ENCODE measurements at regions of chr6 and their contacts with region 1.

Region 1: GRCh38 chr6:136582711-136583471 is 32.7 kb upstream of the MAP7 start:
- DNase-seq: peak; percentile 81
- ATAC-seq: peak; percentile 48
- H3K4me3 ChIP-seq: no peak overlapping the region
- H3K27ac ChIP-seq: peak overlapping the region; percentile 80
- H3K4me1 ChIP-seq: peaks cover 6% of the 10 kb centered on the region
- H3K27me3 ChIP-seq: no peaks in the 10 kb centered on the region
- CTCF ChIP-seq: peak; percentile 70

Region 2: DNA sequence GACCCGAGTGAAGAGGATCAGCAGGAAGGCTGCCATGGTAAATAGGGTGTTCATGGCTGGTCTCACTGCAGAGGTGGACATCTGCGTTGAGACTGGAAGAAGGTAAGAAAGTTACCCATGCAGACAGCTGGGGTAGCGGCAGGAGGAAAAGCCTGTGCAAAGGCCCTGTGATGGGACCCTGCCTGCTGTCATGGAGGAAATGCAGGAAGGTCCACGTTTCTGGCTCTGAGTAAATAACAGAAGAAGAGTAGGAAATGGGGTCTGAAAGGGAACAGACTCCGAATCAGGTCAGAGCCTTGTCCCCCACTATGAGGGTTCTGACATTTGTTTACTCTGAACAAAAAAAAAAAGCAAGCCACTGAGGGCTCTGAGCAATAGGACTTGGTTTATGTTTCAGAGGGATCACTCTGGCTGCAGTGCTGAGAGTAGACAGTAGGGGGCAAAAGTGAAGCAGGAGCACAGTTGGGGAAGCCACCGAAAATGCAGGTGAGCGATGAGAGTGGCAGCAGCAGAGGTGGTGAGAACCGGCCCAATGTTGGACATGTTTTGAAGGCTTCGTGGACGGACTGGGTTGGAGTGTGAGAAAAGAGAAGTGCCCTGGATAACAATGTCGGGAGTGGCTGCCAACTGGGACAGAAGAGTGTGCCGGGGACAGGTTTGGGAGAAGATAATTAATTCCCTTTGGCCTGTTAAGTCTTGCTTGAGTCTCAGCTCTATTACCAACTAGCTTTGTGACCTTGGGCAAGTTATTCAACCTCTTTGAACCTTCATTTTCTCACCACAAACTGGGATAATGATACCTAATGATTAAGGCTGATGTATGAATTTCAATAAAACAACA is 25.3 kb after region 1 on chr6:
- CTCF ChIA-PET with region 1: no interaction called
- POLR2A ChIA-PET with region 1: no interaction called
- intact Hi-C with region 1: loop called (anchors 1 kb)
- DNase-seq: peak; percentile 76
- ATAC-seq: no peak
- H3K4me3 ChIP-seq: no peak overlapping the region
- H3K27ac ChIP-seq: peak overlapping the region; percentile 97
- H3K4me1 ChIP-seq: peaks cover 43% of the 10 kb centered on the region
- H3K27me3 ChIP-seq: no peaks in the 10 kb centered on the region
- CTCF ChIP-seq: peak; percentile 73

Region 3: DNA sequence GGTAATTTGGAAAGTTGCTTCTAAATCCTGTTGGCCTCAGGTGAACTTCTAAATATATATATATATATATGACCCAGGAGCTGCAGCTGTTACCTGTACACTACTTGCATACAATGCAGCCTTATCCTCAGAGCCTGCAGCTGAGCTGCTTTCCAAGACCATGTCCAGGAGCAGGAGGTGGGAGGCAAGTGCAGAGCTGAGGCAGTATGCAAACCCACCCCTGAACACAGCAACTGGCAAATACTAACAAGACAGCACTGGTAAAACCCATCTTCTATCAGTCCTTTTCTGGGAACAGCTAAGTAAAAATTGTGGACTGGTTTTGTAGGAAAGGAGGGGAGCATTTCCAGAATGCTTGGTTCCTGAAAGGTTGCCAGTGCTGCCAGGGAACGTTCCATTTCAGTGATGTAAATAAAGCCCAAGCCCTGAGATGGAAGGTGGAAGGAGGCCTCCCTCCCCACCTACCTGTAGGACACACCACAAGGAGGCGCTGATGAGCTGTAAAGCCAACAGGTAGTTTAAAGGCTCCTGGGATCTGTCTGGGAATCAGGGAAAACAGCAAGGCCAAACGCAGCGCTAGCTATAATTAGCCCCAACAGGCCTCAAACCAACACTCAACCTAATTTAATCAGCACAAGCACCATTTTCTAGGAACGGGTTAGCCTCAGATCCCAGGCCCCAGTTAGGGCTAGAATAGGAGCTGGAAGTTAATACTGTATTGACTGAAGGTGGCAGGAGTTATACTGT is 61.1 kb after region 1 on chr6:
- CTCF ChIA-PET with region 1: no interaction called
- POLR2A ChIA-PET with region 1: no interaction called
- intact Hi-C with region 1: loop called (anchors 1 kb)
- DNase-seq: peak; percentile 88
- ATAC-seq: peak; percentile 99
- H3K4me3 ChIP-seq: no peak overlapping the region
- H3K27ac ChIP-seq: peak overlapping the region; percentile 48
- H3K4me1 ChIP-seq: peaks cover 12% of the 10 kb centered on the region; the same call in 1 of the 2 replicates
- H3K27me3 ChIP-seq: no peaks in the 10 kb centered on the region
- CTCF ChIP-seq: peak; percentile 89

Region 4: DNA sequence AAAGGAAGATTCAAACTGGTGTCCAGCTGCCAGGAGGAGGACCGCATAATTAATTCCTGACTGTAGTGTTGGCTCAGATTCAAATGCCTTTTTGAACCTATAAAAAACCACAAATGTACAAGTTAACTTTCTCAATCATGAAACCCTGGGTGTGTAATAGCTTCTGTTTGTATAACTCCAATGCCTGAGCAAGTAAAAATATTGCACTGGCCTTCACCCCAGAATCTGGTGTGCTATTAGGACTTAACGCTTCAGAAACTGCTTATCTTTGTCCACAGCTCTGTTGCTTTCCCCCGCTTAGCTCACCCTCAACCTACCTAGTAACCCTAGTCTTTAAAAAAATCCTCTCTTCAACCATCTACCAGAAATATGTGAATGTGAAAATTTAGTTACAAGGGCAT is 86.4 kb after region 1 on chr6:
- CTCF ChIA-PET with region 1: no interaction called
- POLR2A ChIA-PET with region 1: interaction called, 3 read pairs
- intact Hi-C with region 1: loop called (anchors 1 kb)
- DNase-seq: peak; percentile 85
- ATAC-seq: peak; percentile 88
- H3K4me3 ChIP-seq: peak overlapping the region; percentile 32; the same call in 1 of the 2 replicates
- H3K27ac ChIP-seq: peak overlapping the region; percentile 59
- H3K4me1 ChIP-seq: peaks cover 30% of the 10 kb centered on the region
- H3K27me3 ChIP-seq: no peaks in the 10 kb centered on the region
- CTCF ChIP-seq: no peak

Measured in PC-3 (cell line).